Calu3 (cell line): ENCODE measurements at regions of chr3 and their contacts with region 1.

Region 1: GRCh38 chr3:184017672-184018423 is at the start of gene ABCC5:
- DNase-seq: peak; percentile 95
- H3K4me3 Mint-ChIP-seq: peak within 1 kb of the TSS; percentile 100
- H3K27ac Mint-ChIP-seq: peak within 1 kb of the TSS; percentile 77
- H3K4me1 Mint-ChIP-seq: peaks cover 31% of the 10 kb centered on the region
- H3K27me3 Mint-ChIP-seq: peaks cover 22% of the 10 kb centered on the region
- CTCF ChIP-seq: peak; percentile 54
- total RNA-seq, gene ABCC5: 33.8 and 39.1 TPM in 2 replicates

Region 2: GRCh38 chr3:183904833-183905780 is 112.7 kb before region 1 on chr3:
- CTCF ChIA-PET with region 1: interaction called, 10 read pairs
- intact Hi-C with region 1: loop called (anchors 2 kb)
- DNase-seq: no peak
- H3K4me3 Mint-ChIP-seq: no peak overlapping the region
- H3K27ac Mint-ChIP-seq: no peak overlapping the region
- H3K4me1 Mint-ChIP-seq: no peaks in the 10 kb centered on the region
- H3K27me3 Mint-ChIP-seq: no peaks in the 10 kb centered on the region
- CTCF ChIP-seq: no peak

Region 3: DNA sequence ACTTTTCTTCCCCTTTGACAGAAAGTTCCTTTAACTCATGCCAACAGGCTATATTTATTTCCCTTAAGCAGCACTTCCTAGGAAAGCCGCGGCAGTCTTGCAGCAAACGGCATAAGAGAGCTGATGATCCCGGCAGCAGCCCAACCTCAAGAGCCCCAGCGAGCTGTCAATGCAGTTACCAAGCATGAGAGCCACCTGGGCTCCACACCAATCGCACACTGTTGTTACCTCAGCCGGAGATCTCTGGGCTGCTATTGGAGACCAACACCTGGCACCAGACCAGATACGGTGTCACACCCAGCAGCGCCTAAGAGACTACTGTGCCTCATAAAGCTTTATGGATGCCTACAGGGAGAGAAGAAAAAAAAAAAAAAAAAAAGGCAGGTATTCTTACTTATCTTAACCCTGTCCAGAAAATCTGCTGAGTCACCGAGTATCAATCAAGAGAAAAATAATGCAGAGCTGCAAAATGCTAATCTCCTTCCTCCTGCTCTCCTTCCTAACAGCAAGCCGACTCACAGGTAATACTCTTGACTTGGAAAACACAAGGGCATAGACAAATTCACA is 11.8 kb before region 1 on chr3:
- CTCF ChIA-PET with region 1: interaction called, 18 read pairs
- intact Hi-C with region 1: no loop called
- DNase-seq: peak; percentile 92
- H3K4me3 Mint-ChIP-seq: peak overlapping the region; percentile 47
- H3K27ac Mint-ChIP-seq: peak overlapping the region; percentile 34
- H3K4me1 Mint-ChIP-seq: peaks cover 27% of the 10 kb centered on the region
- H3K27me3 Mint-ChIP-seq: no peaks in the 10 kb centered on the region
- CTCF ChIP-seq: no peak

Region 4: GRCh38 chr3:184261270-184261853 is 243.5 kb after region 1 on chr3 and contains the start of gene CAMK2N2:
- CTCF ChIA-PET with region 1: interaction called, 12 read pairs
- intact Hi-C with region 1: no loop called
- DNase-seq: peak; percentile 87
- H3K4me3 Mint-ChIP-seq: peak within 1 kb of the TSS; percentile 66
- H3K27ac Mint-ChIP-seq: peak within 1 kb of the TSS; percentile 62
- H3K4me1 Mint-ChIP-seq: peaks cover 24% of the 10 kb centered on the region
- H3K27me3 Mint-ChIP-seq: peaks cover 68% of the 10 kb centered on the region
- CTCF ChIP-seq: no peak
- total RNA-seq, gene CAMK2N2: 3.3 and 3.6 TPM in 2 replicates